ENCODE measurements at regions of chr12 and their contacts with region 1.

Region 1: DNA sequence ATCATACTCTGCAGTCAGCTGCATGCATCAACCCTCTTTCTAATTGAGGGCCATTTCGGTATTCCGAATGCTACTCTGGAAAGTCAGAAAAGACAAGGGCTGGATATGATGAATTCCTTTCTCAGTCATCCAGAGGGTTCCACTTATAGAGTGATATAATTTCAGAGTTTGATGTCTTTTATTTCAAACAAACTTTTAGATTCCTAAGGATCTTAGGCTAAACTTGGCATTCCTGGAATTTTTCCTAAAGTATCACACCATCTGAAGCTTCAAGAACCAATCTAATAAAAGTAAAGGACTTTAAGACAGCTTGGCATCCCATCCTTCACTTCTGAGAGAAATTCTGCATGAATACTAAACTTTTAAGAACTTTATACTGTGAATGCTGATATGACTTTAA is 69.3 kb upstream of the KCNJ8 start:
- DNase-seq: no peak
- ATAC-seq: no peak
- H3K4me3 ChIP-seq: no peak overlapping the region
- H3K27ac ChIP-seq: no peak overlapping the region
- H3K4me1 ChIP-seq: no peaks in the 10 kb centered on the region
- H3K27me3 ChIP-seq: no peaks in the 10 kb centered on the region
- CTCF ChIP-seq: no peak
- POLR2A ChIP-seq: no peak

Region 2: DNA sequence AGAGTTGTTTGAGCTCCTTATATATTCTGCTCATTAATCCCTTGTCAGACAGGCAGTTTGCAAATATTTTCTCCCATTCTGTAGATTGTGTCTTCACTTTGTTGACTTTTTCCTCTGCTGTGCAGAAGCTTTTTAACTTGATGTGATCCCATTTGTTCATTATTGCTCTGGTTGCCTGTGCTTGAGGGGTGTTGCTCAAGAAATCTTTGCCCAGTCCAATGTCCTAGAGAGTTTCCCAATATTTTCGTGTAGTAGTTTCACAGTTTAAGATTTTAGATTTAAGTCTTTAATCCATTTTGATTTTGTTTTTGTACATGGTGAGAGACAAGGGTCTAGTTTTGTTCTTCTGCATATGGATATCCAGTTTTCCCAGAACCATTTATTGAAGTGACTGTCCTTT is 77.6 kb after region 1 on chr12:
- intact Hi-C with region 1: loop called in 1 of 10 experiments (anchors 5 kb)
- DNase-seq: no peak
- ATAC-seq: no peak
- H3K4me3 ChIP-seq: no peak overlapping the region
- H3K27ac ChIP-seq: no peak overlapping the region
- H3K4me1 ChIP-seq: no peaks in the 10 kb centered on the region
- H3K27me3 ChIP-seq: no peaks in the 10 kb centered on the region
- CTCF ChIP-seq: no peak
- POLR2A ChIP-seq: no peak

Measured in heart left ventricle (tissue), 16 donors.